ENCODE measurements at regions of chr19 and their contacts with region 1.

Region 1: DNA sequence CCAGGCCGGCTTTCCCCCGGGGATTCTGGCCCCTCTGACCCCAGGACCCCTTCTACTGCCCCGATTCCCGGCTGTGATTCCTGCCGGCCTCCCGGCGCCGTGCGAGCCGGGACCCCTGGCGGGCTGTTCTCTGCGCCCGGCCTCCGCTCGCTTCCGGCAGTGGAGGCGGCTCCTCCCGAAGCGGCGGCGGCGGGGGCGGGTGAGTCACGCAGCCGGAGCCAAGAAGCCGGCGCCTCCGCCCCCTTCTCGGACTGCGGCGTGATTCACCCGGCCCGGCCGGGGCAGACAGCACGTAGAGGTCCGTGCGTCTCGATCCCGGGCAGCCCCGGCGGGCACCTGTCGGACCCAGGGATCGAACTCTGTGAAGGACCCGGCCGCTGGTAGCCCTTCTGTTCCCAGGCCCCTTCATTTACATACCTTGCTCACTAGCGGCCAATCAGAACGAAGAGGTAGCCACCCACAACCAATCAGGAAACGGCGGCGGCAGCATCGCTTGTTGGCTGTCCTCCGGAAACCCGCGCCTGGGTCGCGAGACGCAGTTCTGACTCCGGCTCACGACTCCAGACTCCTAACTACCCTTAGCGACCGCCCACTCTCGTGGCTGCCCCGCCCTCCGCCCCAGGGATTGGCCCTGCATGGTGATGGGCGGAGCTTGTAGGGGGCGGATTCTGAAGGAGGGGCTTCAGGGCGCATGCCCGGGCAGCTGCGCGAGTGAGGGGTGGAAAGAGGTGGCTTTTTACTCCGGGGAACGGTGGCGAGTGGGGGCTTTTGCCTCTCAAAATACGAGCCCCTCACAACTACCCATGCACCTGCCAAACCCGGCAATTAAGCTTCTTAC is at the start of gene SERTAD1:
- DNase-seq: peak; percentile 100
- ATAC-seq: peak; percentile 91
- H3K4me3 Mint-ChIP-seq: peak within 1 kb of the TSS; percentile 81
- H3K27ac Mint-ChIP-seq: peak within 1 kb of the TSS; percentile 90
- H3K4me1 Mint-ChIP-seq: peaks cover 26% of the 10 kb centered on the region
- H3K27me3 Mint-ChIP-seq: no peaks in the 10 kb centered on the region
- total RNA-seq, gene SERTAD1: 9.3 to 10.1 TPM

Region 2: GRCh38 chr19:40285353-40286234 is 140.1 kb before region 1 on chr19:
- CTCF ChIA-PET with region 1: no interaction called
- POLR2A ChIA-PET with region 1: no interaction called
- DNase-seq: peak; percentile 99
- ATAC-seq: peak; percentile 91
- H3K4me3 Mint-ChIP-seq: peak overlapping the region; percentile 89
- H3K27ac Mint-ChIP-seq: peak overlapping the region; percentile 99
- H3K4me1 Mint-ChIP-seq: peaks cover 43% of the 10 kb centered on the region
- H3K27me3 Mint-ChIP-seq: no peaks in the 10 kb centered on the region

Region 3: DNA sequence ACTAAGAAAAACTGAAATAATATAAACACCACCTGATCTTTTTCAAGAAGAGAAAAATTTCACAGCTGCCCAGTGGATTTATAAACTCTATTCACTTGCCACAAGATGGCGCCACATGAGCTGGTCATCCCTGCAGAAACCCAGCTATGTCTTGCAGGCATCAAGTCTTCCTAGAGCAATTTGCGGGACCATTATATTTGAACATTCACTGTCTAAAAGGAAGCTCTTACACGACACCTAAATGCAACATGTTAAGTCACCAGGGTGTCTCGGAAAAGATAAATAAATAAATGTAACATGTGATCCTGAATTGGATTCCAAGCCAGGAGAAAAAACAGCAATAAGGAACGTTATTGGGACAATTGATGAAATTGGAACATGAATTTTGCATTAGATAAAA is 120.3 kb before region 1 on chr19:
- CTCF ChIA-PET with region 1: interaction called, 16 read pairs
- POLR2A ChIA-PET with region 1: interaction called, 3 read pairs
- DNase-seq: peak; percentile 89
- ATAC-seq: peak; percentile 82
- H3K4me3 Mint-ChIP-seq: no peak overlapping the region
- H3K27ac Mint-ChIP-seq: no peak overlapping the region
- H3K4me1 Mint-ChIP-seq: peaks cover 3% of the 10 kb centered on the region
- H3K27me3 Mint-ChIP-seq: no peaks in the 10 kb centered on the region

Region 4: GRCh38 chr19:40331069-40331468 is 94.6 kb before region 1 on chr19:
- CTCF ChIA-PET with region 1: no interaction called
- POLR2A ChIA-PET with region 1: no interaction called
- DNase-seq: no peak
- ATAC-seq: no peak
- H3K4me3 Mint-ChIP-seq: no peak overlapping the region
- H3K27ac Mint-ChIP-seq: peak overlapping the region; percentile 22
- H3K4me1 Mint-ChIP-seq: no peaks in the 10 kb centered on the region
- H3K27me3 Mint-ChIP-seq: no peaks in the 10 kb centered on the region

Region 5: GRCh38 chr19:40348125-40348913 is 77.3 kb before region 1 on chr19 and contains the starts of genes C19orf47 and PLD3:
- CTCF ChIA-PET with region 1: interaction called, 10 read pairs
- POLR2A ChIA-PET with region 1: interaction called, 9 read pairs
- DNase-seq: peak; percentile 99
- ATAC-seq: peak; percentile 95
- H3K4me3 Mint-ChIP-seq: peak within 1 kb of the TSS; percentile 86
- H3K27ac Mint-ChIP-seq: peak within 1 kb of the TSS; percentile 89
- H3K4me1 Mint-ChIP-seq: peaks cover 38% of the 10 kb centered on the region
- H3K27me3 Mint-ChIP-seq: peaks cover 2% of the 10 kb centered on the region
- total RNA-seq, gene C19orf47: 27.7 to 28.3 TPM
- total RNA-seq, gene PLD3: 65.1 to 70.0 TPM

Region 6: GRCh38 chr19:40403262-40403984 is 22.2 kb before region 1 on chr19:
- CTCF ChIA-PET with region 1: interaction called, 12 read pairs
- POLR2A ChIA-PET with region 1: interaction called, 14 read pairs
- DNase-seq: peak; percentile 89
- ATAC-seq: peak; percentile 78
- H3K4me3 Mint-ChIP-seq: peak overlapping the region; percentile 87
- H3K27ac Mint-ChIP-seq: peak overlapping the region; percentile 72
- H3K4me1 Mint-ChIP-seq: peaks cover 32% of the 10 kb centered on the region
- H3K27me3 Mint-ChIP-seq: peaks cover 12% of the 10 kb centered on the region

Region 7: GRCh38 chr19:40444192-40445028 is 18.7 kb after region 1 on chr19 and contains the start of gene SERTAD3:
- CTCF ChIA-PET with region 1: interaction called, 21 read pairs
- POLR2A ChIA-PET with region 1: interaction called, 29 read pairs
- DNase-seq: peak; percentile 98
- ATAC-seq: peak; percentile 78
- H3K4me3 Mint-ChIP-seq: peak within 1 kb of the TSS; percentile 98
- H3K27ac Mint-ChIP-seq: peak within 1 kb of the TSS; percentile 98
- H3K4me1 Mint-ChIP-seq: peaks cover 18% of the 10 kb centered on the region
- H3K27me3 Mint-ChIP-seq: no peaks in the 10 kb centered on the region
- total RNA-seq, gene SERTAD3: 10.0 to 11.9 TPM

Region 8: DNA sequence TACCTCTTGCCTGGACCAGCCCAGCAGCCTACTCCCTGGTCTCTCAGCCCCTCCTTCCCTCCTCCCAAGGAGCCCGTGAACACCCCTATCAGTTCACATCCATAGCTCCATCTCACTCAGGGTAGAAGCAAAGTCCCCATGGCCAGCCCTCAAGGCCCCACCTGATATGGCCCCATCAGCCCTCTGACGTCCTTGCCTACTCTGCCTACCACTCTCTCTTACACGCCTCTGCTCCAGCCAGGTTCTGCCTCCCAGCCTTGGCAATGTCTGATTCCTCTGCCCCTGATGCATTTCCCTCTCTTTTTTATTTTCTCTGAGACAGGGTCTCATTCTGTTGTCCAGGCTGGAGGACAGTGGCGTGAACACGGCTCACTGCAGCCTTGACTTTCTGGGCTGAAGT is 26.3 kb after region 1 on chr19:
- CTCF ChIA-PET with region 1: interaction called, 10 read pairs
- POLR2A ChIA-PET with region 1: interaction called, 5 read pairs
- DNase-seq: no peak
- ATAC-seq: no peak
- H3K4me3 Mint-ChIP-seq: no peak overlapping the region
- H3K27ac Mint-ChIP-seq: no peak overlapping the region
- H3K4me1 Mint-ChIP-seq: no peaks in the 10 kb centered on the region
- H3K27me3 Mint-ChIP-seq: no peaks in the 10 kb centered on the region

Region 9: GRCh38 chr19:40489882-40490230 is 64.2 kb after region 1 on chr19:
- CTCF ChIA-PET with region 1: no interaction called
- POLR2A ChIA-PET with region 1: no interaction called
- DNase-seq: no peak
- ATAC-seq: no peak
- H3K4me3 Mint-ChIP-seq: no peak overlapping the region
- H3K27ac Mint-ChIP-seq: no peak overlapping the region
- H3K4me1 Mint-ChIP-seq: peaks cover 6% of the 10 kb centered on the region
- H3K27me3 Mint-ChIP-seq: peaks cover 23% of the 10 kb centered on the region

Region 10: GRCh38 chr19:40603389-40604135 is 177.9 kb after region 1 on chr19:
- CTCF ChIA-PET with region 1: interaction called, 10 read pairs
- POLR2A ChIA-PET with region 1: no interaction called
- DNase-seq: peak; percentile 99
- ATAC-seq: peak; percentile 79
- H3K4me3 Mint-ChIP-seq: peak overlapping the region; percentile 80
- H3K27ac Mint-ChIP-seq: peak overlapping the region; percentile 92
- H3K4me1 Mint-ChIP-seq: peaks cover 78% of the 10 kb centered on the region
- H3K27me3 Mint-ChIP-seq: peaks cover 33% of the 10 kb centered on the region